ENCODE measurements at regions of chr19 and their contacts with region 1.

Region 1: GRCh38 chr19:52189735-52190486 is at the start of gene PPP2R1A:
- DNase-seq: peak; percentile 98 to 100
- ATAC-seq: peak; percentile 92 to 97 (median 94)
- H3K4me3 ChIP-seq: peak within 1 kb of the TSS; percentile 73 to 98 (median 87)
- H3K27ac ChIP-seq: peak within 1 kb of the TSS; percentile 98 to 100 (median 99)
- H3K4me1 ChIP-seq: peaks cover 26 to 55% (median 48%) of the 10 kb centered on the region in 9 donors
- H3K27me3 ChIP-seq: no peaks in the 10 kb centered on the region
- CTCF ChIP-seq: no peak
- total RNA-seq, gene PPP2R1A: 337 to 469 (median 401) TPM

Region 2: GRCh38 chr19:52139252-52140031 is 50.5 kb before region 1 on chr19 and contains the start of gene ZNF616:
- intact Hi-C with region 1: loop called in 6 of 10 experiments (anchors 1 to 10 kb)
- DNase-seq: peak; percentile 89 to 98
- ATAC-seq: peak; percentile 93 to 100 (median 98)
- H3K4me3 ChIP-seq: peak within 1 kb of the TSS; percentile 61 to 94 (median 80)
- H3K27ac ChIP-seq: peak within 1 kb of the TSS; percentile 42 to 96 (median 92)
- H3K4me1 ChIP-seq: peaks cover 2 to 24% (median 18%) of the 10 kb centered on the region in 9 donors
- H3K27me3 ChIP-seq: no peaks in the 10 kb centered on the region
- CTCF ChIP-seq: peak; percentile 62 to 95 (median 80)
- total RNA-seq, gene ZNF616: 4.9 to 8.0 (median 6.5) TPM

Region 3: DNA sequence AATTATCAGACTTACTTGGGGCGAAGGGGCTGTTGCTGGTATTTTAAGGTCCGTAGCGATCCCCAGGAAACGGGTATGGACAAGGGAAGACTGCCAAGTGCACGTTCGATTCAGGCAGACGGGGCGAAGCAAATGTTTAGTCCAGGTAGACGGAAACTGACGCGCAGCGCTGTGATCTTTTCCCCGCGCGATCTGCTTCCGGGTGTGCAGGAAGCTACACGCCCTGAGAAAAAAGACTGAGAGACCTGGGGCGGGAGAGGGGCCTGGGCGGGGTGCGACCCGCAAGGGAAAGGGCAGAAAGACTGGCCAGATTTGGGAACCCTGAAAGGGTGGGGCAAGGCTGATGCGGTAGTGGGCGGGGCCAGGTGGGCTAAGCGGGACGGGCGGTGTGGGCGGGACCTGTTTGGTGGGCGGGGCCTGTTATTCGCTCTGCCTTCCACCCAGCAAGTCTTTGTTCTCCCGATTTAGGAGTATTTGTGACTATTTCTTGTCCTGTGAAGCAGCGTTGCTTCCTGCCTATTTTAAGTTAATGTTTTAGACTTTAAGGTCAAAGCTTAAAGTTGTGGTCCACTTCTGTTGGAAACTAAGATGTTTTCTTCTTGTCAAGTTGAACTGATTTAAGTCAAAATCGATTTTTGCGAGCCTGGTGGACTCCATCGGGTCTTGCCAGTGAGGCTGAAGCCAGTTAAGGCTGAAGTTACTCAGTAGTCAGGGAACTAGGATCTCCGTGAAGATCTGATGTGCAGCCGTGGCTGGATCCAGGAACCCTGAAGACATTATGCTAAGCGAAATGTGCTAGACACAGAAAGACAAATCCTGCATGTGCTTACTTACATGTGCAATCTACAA is 18.4 kb before region 1 on chr19 and contains the start of gene ZNF836:
- intact Hi-C with region 1: loop called in 1 of 10 experiments (anchors 1 kb)
- DNase-seq: peak; percentile 92 to 93
- ATAC-seq: peak; percentile 96 to 99 (median 98)
- H3K4me3 ChIP-seq: peak within 1 kb of the TSS; percentile 74 to 95 (median 80)
- H3K27ac ChIP-seq: peak within 1 kb of the TSS; percentile 43 to 90 (median 85)
- H3K4me1 ChIP-seq: peaks cover 0 to 28% (median 14%) of the 10 kb centered on the region in 9 donors
- H3K27me3 ChIP-seq: no peaks in the 10 kb centered on the region
- CTCF ChIP-seq: no peak
- total RNA-seq, gene ZNF836: 5.1 to 10.6 (median 7.1) TPM

Region 4: GRCh38 chr19:52231154-52231910 is 41.4 kb after region 1 on chr19:
- intact Hi-C with region 1: loop called in 1 of 10 experiments (anchors 5 kb)
- DNase-seq: no peak
- ATAC-seq: no peak
- H3K4me3 ChIP-seq: no peak overlapping the region
- H3K27ac ChIP-seq: no peak overlapping the region
- H3K4me1 ChIP-seq: no peaks in the 10 kb centered on the region
- H3K27me3 ChIP-seq: no peaks in the 10 kb centered on the region
- CTCF ChIP-seq: no peak

Region 5: DNA sequence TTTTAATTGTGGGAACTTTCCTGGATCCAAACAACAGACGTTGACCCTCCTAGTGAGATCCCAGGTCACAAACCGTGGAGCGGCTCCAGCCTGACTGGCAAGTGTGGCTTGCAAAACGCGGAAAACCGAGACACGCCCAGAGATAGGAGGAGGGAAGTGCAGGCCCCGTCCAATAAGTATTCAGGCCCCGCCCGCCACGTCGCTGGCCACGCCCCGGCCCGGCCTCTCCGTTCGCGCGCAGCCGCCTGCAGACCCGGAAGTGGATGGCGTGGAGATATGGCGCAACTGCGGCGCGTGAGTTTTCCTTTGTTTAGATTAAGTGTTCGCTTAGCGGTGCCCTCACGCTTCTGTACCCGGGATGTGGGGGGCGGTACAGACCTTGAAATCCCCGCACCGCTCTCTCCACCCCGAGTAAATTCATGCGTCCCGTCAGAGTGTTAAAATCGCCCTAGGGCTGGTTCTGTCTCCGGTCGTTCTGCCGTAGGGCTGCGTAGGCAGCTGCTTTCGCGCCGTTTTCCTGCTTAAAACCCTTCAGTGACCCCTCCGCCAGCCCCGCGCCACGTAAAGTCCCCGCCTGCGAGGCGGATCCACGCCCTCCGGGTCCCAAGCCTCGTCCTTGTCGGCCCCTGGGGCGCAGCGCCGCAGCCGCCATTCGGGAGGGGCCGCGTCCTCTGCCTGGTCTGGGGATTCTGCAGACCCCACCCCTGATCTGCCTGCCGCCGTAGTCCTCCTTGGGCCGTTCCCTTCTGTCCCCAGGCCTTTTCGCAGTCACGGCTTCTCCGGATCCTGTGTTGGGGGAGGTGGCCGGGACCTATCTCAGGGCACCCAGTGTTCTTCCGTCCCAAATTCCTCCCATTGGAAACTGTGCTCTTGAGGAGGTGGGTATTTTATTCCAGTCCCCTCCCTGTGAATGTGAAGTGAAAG is 79.7 kb after region 1 on chr19 and contains the start of gene ZNF766:
- intact Hi-C with region 1: no loop called
- DNase-seq: peak; percentile 96 to 98
- ATAC-seq: peak; percentile 99 to 100 (median 100)
- H3K4me3 ChIP-seq: peak within 1 kb of the TSS; percentile 79 to 100 (median 92)
- H3K27ac ChIP-seq: peak within 1 kb of the TSS; percentile 78 to 99 (median 95)
- H3K4me1 ChIP-seq: peaks cover 4 to 28% (median 19%) of the 10 kb centered on the region in 9 donors
- H3K27me3 ChIP-seq: no peaks in the 10 kb centered on the region
- CTCF ChIP-seq: no peak
- total RNA-seq, gene ZNF766: 9.0 to 14.4 (median 10.5) TPM